Tibial artery (tissue), 4 donors: ENCODE measurements at regions of chr9 and their contacts with region 1.

Region 1: DNA sequence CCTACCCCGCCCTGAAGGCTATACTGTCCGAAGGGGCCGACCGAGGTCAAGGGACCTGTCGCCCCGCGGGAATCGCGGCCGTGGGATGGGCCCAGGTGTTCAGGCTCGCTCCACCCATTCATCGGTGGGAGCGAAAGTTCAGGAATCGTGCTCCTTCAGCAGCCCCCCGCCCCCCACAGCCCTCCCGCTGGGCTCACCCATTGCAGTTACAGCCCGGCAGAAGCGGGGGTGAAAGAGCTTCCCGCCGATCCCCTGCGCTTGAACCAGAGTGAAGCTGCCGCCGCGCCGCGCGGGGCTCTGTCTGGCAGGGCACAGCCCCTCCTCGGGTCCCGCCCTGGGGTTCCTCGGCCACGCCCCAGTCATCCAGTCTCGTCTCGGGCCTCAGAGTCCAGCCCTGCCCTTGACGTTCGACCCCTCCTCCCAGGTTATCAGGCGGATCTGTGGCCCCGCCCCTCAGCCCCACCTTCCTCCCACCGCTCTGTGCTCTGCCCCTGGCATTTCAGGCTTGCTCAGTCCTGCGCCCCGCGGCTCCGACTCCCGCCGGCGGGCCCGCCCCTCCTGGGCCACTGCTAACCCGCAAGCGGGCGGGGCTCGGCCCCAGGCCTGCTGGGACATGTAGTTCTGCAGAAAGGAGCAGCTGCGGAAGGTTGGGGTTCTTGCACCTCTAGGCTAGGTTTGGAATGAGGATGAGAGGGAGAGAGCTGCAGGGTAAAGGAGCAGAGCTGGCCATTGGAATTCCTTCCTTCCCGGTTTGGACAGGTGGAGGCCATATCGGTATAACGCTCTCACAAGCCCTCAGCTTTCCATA is at the start of gene MYORG:
- DNase-seq: peak; percentile 92 to 93
- H3K4me3 ChIP-seq: peak within 1 kb of the TSS; percentile 61 to 71
- H3K27ac ChIP-seq: peak within 1 kb of the TSS; percentile 62 to 72
- H3K4me1 ChIP-seq: peaks cover 0 to 46% (median 28%) of the 10 kb centered on the region in 4 donors
- H3K27me3 ChIP-seq: peaks cover 0 to 10% of the 10 kb centered on the region in 2 donors
- CTCF ChIP-seq: no peak

Region 2: DNA sequence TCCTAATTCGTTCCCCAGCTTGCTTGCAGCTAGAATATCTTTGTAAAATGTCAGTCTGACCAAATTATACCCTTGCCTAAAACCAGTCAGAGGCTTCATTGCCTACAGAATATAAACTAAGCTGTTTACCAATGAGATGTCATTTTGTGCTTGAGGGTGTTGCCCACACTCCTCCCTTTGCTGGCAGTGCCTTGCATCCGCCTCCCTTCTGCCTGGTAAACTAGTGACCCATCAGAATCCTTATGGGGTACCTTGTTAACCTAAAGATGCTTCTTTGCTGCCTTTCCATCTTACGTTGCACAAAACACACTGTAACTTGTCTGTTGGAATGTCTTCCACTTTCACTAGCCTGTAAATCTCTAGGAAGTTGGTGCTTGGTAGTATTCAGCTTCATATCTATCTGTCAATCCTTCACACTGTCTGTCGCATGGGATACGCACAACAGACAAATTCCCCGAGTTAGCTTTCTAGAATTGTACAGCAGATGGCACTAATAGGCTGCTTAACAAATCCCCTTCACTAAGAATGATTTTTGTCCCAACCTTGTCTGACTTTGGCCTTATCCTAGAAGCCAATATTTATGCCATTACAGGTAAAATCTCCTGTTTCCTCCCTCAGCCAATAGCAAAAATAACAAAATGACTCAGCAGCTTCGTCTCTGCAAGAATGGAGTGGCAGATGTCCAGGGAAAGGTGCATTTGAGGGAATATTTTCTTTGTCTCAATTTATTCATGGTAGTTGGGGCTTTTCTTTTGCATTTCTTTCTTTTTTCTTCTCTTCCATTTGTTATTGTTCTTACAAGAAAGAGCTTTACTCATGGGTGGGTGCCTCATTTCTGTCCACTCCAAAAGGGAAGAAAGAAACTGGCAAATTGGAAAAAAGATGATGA is 44.5 kb before region 1 on chr9:
- intact Hi-C with region 1: loop called (anchors 2 kb)
- DNase-seq: no peak
- H3K4me3 ChIP-seq: no peak overlapping the region
- H3K27ac ChIP-seq: no peak overlapping the region
- H3K4me1 ChIP-seq: peaks cover 0 to 19% (median 9%) of the 10 kb centered on the region in 4 donors
- H3K27me3 ChIP-seq: no peaks in the 10 kb centered on the region
- CTCF ChIP-seq: peak; percentile 54